ENCODE measurements at regions of chr9 and their contacts with region 1.

Region 1: GRCh38 chr9:69759421-69760277 is at the start of gene PTAR1:
- DNase-seq: peak; percentile 88
- H3K4me3 Mint-ChIP-seq: peak within 1 kb of the TSS; percentile 91
- H3K27ac Mint-ChIP-seq: peak within 1 kb of the TSS; percentile 95
- H3K4me1 Mint-ChIP-seq: peaks cover 34% of the 10 kb centered on the region
- H3K27me3 Mint-ChIP-seq: peaks cover 5% of the 10 kb centered on the region
- total RNA-seq, gene PTAR1: 47.5 and 52.3 TPM in 2 replicates

Region 2: DNA sequence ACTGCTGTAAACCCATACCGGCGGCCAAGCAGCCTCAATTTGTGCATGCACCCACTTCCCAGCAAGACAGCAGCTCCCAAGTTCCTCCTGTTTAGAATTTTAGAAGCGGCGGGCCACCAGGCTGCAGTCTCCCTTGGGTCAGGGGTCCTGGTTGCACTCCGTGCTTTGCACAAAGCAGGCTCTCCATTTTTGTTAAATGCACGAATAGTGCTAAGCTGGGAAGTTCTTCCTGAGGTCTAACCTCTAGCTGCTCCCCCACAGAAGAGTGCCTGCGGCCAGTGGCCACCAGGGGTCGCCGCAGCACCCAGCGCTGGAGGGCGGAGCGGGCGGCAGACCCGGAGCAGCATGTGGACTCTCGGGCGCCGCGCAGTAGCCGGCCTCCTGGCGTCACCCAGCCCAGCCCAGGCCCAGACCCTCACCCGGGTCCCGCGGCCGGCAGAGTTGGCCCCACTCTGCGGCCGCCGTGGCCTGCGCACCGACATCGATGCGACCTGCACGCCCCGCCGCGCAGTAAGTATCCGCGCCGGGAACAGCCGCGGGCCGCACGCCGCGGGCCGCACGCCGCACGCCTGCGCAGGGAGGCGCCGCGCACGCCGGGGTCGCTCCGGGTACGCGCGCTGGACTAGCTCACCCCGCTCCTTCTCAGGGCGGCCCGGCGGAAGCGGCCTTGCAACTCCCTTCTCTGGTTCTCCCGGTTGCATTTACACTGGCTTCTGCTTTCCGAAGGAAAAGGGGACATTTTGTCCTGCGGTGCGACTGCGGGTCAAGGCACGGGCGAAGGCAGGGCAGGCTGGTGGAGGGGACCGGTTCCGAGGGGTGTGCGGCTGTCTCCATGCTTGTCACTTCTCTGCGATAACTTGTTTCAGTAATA is 724.0 kb before region 1 on chr9 and contains the start of gene FXN:
- intact Hi-C with region 1: loop called (anchors 5 kb)
- DNase-seq: peak; percentile 78
- H3K4me3 Mint-ChIP-seq: peak within 1 kb of the TSS; percentile 88
- H3K27ac Mint-ChIP-seq: peak within 1 kb of the TSS; percentile 78
- H3K4me1 Mint-ChIP-seq: peaks cover 15% of the 10 kb centered on the region
- H3K27me3 Mint-ChIP-seq: no peaks in the 10 kb centered on the region
- total RNA-seq, gene FXN: 43.6 and 47.7 TPM in 2 replicates

Region 3: GRCh38 chr9:69421908-69422801 is 337.5 kb before region 1 on chr9:
- intact Hi-C with region 1: loop called (anchors 10 kb)
- DNase-seq: peak; percentile 31
- H3K4me3 Mint-ChIP-seq: no peak overlapping the region
- H3K27ac Mint-ChIP-seq: no peak overlapping the region
- H3K4me1 Mint-ChIP-seq: no peaks in the 10 kb centered on the region
- H3K27me3 Mint-ChIP-seq: no peaks in the 10 kb centered on the region

Region 4: DNA sequence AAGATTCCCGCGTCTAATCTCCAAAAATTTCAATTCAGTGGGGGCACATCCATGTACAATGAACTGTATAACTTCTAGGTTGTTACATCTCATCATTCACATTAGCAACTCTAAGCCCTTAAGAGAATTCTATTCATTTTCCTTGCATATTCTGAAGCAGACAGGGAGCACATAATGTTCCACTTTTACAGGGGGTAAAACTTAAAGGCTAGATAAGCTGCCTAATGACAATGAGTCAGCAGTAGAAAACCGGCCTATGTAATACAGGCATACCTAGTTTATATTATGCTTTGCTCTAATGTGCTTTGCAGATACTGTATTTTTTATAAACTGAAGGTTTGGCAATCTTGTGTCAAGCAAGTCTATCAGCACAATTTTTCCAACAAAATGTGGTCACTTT is 40.3 kb before region 1 on chr9:
- intact Hi-C with region 1: loop called (anchors 5 kb)
- DNase-seq: no peak
- H3K4me3 Mint-ChIP-seq: no peak overlapping the region
- H3K27ac Mint-ChIP-seq: no peak overlapping the region
- H3K4me1 Mint-ChIP-seq: no peaks in the 10 kb centered on the region
- H3K27me3 Mint-ChIP-seq: no peaks in the 10 kb centered on the region

Region 5: GRCh38 chr9:69822091-69822750 is 62.6 kb after region 1 on chr9:
- intact Hi-C with region 1: loop called (anchors 5 kb)
- DNase-seq: no peak
- H3K4me3 Mint-ChIP-seq: no peak overlapping the region
- H3K27ac Mint-ChIP-seq: peak overlapping the region; percentile 13
- H3K4me1 Mint-ChIP-seq: peaks cover 46% of the 10 kb centered on the region
- H3K27me3 Mint-ChIP-seq: peaks cover 10% of the 10 kb centered on the region

Region 6: GRCh38 chr9:69877854-69878514 is 118.3 kb after region 1 on chr9:
- intact Hi-C with region 1: loop called (anchors 2 kb)
- DNase-seq: no peak
- H3K4me3 Mint-ChIP-seq: no peak overlapping the region
- H3K27ac Mint-ChIP-seq: no peak overlapping the region
- H3K4me1 Mint-ChIP-seq: no peaks in the 10 kb centered on the region
- H3K27me3 Mint-ChIP-seq: peaks cover 7% of the 10 kb centered on the region

Region 7: DNA sequence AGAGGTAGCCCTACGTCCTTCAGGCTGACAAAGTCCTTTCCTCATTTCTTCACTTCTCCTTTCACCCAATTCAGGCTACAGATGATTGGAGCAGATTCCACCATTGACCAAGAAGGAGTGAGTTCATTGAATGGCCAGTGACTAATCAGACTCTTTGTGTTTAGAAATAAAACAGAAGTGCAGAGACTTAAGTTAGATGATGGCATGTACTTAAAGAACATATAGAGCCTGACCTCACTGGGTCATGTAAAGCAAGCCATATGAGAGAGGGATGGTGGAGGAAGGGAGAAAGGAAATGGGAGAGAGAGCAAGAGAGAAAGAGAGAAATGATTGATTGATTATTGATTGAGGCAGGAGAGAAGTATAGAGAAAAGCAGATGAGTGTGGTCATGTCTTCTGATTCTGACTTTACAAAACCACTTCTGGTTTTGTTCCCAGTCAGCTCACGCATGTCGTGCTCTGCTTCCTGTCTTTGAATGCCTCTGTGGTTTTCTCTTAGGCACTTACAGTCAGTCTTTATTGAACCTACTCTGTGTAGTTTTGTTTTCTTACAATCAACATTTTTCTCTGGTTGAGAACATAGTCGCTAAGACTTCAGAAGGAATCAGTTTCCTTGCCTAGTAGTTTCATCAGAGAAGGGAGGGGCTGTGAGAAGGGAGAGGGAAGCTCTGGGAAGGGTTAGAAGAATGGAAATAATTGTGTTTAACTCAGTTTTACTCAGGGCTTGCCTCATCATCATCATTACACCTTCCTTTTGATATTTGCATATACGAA is 804.0 kb after region 1 on chr9:
- intact Hi-C with region 1: loop called (anchors 5 kb)
- DNase-seq: peak; percentile 70
- H3K4me3 Mint-ChIP-seq: peak overlapping the region; percentile 69
- H3K27ac Mint-ChIP-seq: peak overlapping the region; percentile 89
- H3K4me1 Mint-ChIP-seq: peaks cover 72% of the 10 kb centered on the region
- H3K27me3 Mint-ChIP-seq: peaks cover 2% of the 10 kb centered on the region